Mammary epithelial cell (primary cell): ENCODE measurements at regions of chr5 and their contacts with region 1.

Region 1: GRCh38 chr5:96752341-96753016 is 55.3 kb downstream of the ERAP1 start:
- DNase-seq: peak; percentile 12
- H3K4me3 ChIP-seq: no peak overlapping the region
- H3K27ac ChIP-seq: no peak overlapping the region
- H3K4me1 ChIP-seq: no peaks in the 10 kb centered on the region
- H3K27me3 ChIP-seq: no peaks in the 10 kb centered on the region
- CTCF ChIP-seq: peak; percentile 54 to 62

Region 2: GRCh38 chr5:97167435-97167834 is 415.0 kb after region 1 on chr5:
- CTCF ChIA-PET with region 1: interaction called, 21 read pairs
- dilution Hi-C with region 1: loop called (anchors 25 kb)
- in situ Hi-C with region 1: loop called in 1 of 2 experiments (anchors 10 kb)
- intact Hi-C with region 1: loop called (anchors 1 kb)
- DNase-seq: no peak
- H3K4me3 ChIP-seq: no peak overlapping the region
- H3K27ac ChIP-seq: no peak overlapping the region
- H3K4me1 ChIP-seq: no peaks in the 10 kb centered on the region
- H3K27me3 ChIP-seq: no peaks in the 10 kb centered on the region
- CTCF ChIP-seq: no peak